ENCODE measurements at regions of chr6 and their contacts with region 1.

Region 1: GRCh38 chr6:42928986-42929820 is at the start of gene CNPY3:
- DNase-seq: peak; percentile 95 to 97 (median 96)
- H3K4me3 ChIP-seq: peak within 1 kb of the TSS; percentile 79 to 89
- H3K4me3 Mint-ChIP-seq: peak within 1 kb of the TSS; percentile 97 to 100 (median 98)
- H3K27ac ChIP-seq: peak within 1 kb of the TSS; percentile 86
- H3K27ac Mint-ChIP-seq: peak within 1 kb of the TSS; percentile 98 to 100 (median 99)
- H3K4me1 ChIP-seq: peaks cover 49% of the 10 kb centered on the region
- H3K4me1 Mint-ChIP-seq: peaks cover 29 to 59% (median 42%) of the 10 kb centered on the region in 4 donors
- H3K27me3 ChIP-seq: no peaks in the 10 kb centered on the region
- H3K27me3 Mint-ChIP-seq: no peaks in the 10 kb centered on the region
- total RNA-seq, gene CNPY3: 83.4 to 86.7 TPM

Region 2: DNA sequence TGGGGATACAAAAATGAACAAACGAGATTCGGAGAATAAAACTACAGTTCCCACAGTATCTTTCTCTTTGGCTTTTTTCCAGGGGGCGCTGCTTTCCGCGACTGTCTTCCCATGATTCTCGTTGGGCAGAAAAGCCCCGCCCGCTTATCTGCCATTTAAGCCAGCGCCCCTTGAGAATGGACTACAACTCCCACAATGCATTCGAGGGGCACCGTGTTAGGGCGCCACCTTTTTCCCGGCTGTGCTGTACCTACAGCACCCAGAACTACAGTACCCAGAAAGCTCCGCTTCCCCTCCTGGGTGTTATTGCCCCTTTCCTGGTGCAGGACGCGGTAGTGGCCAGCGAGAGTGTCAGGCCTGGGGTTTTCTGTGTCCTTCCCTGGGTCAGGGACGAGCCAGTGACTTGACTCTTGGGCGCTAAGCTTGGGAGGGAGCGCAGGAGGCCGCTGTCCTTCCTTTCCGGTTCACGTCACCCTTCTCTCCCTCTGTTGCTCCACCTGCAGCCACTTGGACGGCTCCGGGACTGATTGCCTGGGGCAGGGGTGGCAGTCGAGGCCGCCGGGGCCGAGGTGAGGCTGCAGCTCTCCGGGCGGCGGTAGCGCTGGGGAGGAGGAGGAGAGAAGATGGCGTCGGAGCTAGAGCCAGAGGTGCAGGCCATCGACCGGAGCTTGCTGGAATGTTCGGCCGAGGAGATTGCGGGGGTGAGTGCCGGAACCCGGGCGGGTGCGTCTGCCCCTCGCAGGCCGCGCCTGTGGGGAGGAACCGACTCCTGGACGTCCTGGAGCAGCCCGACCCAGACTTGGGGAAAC is 365.3 kb before region 1 on chr6 and contains the start of gene UBR2:
- CTCF ChIA-PET with region 1: no interaction called
- POLR2A ChIA-PET with region 1: interaction called, 18 read pairs
- intact Hi-C with region 1: no loop called
- DNase-seq: peak; percentile 92 to 98 (median 95)
- H3K4me3 ChIP-seq: peak within 1 kb of the TSS; percentile 98 to 100
- H3K4me3 Mint-ChIP-seq: peak within 1 kb of the TSS; percentile 92 to 100 (median 98)
- H3K27ac ChIP-seq: peak within 1 kb of the TSS; percentile 94
- H3K27ac Mint-ChIP-seq: peak within 1 kb of the TSS; percentile 90 to 98 (median 96)
- H3K4me1 ChIP-seq: peaks cover 33% of the 10 kb centered on the region
- H3K4me1 Mint-ChIP-seq: peaks cover 21 to 43% (median 28%) of the 10 kb centered on the region in 4 donors
- H3K27me3 ChIP-seq: no peaks in the 10 kb centered on the region
- H3K27me3 Mint-ChIP-seq: peaks cover 0 to 1% of the 10 kb centered on the region in 2 donors
- total RNA-seq, gene UBR2: 55.0 to 55.7 TPM

Region 3: DNA sequence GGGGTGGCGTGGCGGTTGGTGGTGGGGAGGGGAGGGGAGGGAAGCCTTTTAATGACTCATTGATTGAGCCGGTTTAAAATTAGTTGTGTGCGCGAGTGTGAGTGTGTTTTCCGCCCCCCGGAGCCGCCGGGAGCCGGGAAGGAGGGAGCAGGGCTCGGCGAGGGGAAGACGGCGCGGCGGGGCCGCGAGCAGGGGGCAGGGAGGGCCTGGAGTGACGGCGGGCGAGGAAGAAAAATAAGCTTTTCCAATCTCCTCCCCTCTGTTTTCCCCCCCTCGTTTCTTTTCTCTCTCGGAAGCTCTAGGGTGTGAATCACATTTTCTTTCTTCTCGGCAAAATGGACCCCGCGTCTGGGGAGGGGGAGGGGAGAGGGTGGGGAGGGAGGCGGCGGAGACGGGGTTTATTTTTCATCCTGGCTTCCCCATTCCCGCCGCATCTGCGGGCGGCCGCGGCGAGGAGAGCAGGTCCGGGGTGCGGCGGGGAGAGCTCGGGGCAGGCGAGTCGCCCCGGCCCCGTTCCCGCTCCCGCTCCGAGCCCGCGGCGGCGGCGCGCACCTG is 146.5 kb before region 1 on chr6:
- CTCF ChIA-PET with region 1: no interaction called
- POLR2A ChIA-PET with region 1: interaction called, 12 read pairs
- intact Hi-C with region 1: no loop called
- DNase-seq: peak; percentile 82 to 87 (median 82)
- H3K4me3 ChIP-seq: peak overlapping the region; percentile 80 to 88
- H3K4me3 Mint-ChIP-seq: peak overlapping the region; percentile 95 to 100 (median 99)
- H3K27ac ChIP-seq: peak overlapping the region; percentile 100
- H3K27ac Mint-ChIP-seq: peak overlapping the region in 6 of 7 donors; percentile 100
- H3K4me1 ChIP-seq: peaks cover 68% of the 10 kb centered on the region
- H3K4me1 Mint-ChIP-seq: peaks cover 20 to 46% (median 28%) of the 10 kb centered on the region in 4 donors
- H3K27me3 ChIP-seq: no peaks in the 10 kb centered on the region
- H3K27me3 Mint-ChIP-seq: peaks cover 0 to 1% of the 10 kb centered on the region in 2 donors

Region 4: GRCh38 chr6:42901536-42901957 is 27.7 kb before region 1 on chr6:
- CTCF ChIA-PET with region 1: interaction called, 10 read pairs
- POLR2A ChIA-PET with region 1: interaction called, 3 read pairs
- intact Hi-C with region 1: loop called (anchors 1 kb)
- DNase-seq: peak; percentile 71 to 80 (median 77)
- H3K4me3 ChIP-seq: no peak overlapping the region
- H3K4me3 Mint-ChIP-seq: no peak overlapping the region
- H3K27ac ChIP-seq: no peak overlapping the region
- H3K27ac Mint-ChIP-seq: peak overlapping the region in 1 of 7 donors; percentile 4
- H3K4me1 ChIP-seq: peaks cover 8% of the 10 kb centered on the region
- H3K4me1 Mint-ChIP-seq: peaks cover 4 to 11% (median 6%) of the 10 kb centered on the region in 4 donors
- H3K27me3 ChIP-seq: no peaks in the 10 kb centered on the region
- H3K27me3 Mint-ChIP-seq: no peaks in the 10 kb centered on the region

Region 5: DNA sequence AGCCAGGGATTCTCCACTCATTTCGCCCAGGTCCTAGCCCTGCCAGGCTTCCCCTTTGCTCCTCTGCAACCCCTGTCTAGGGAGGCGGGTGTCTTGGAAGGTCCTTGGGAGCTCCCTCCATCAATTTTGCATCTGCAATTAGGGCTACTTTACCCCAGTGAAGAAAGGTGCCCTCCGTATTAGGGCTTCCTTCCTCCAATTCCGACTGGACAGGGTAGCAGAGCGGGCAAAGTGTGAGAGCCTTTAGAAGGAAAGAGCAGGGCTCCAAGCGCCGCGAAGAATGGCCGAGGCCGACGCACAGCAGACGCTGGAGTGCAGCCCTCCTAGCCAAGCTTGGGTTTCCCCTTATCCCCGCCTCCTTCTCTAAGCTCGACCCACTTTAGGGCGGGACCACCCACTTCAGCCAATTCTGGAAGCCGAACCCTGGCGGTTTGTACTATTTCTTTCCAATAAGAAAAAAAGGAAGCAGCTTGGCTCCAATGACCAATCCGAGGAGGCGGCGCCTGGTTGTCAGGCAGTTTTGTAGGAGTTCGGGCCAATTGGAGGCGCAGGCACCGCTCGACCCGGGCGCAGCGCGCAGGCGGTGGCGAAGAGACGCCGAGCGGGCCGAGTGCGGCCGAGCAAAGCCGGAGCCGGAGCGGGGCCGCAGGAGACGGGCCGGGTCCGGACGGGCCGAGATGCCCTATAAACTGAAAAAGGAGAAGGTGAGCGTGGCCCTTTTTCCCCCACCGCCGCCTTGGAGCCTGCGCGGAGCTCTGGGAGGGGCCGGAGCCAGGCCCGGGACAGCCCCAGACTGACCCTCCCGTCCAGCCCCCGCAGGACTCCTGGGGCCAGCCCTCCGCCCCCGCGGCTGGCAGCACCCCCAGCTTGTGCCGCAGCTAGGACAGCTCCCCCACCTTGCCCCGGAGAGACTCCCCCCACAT is 55.1 kb after region 1 on chr6 and contains the start of gene PPP2R5D:
- CTCF ChIA-PET with region 1: interaction called, 12 read pairs
- POLR2A ChIA-PET with region 1: interaction called, 100 read pairs
- intact Hi-C with region 1: loop called (anchors 1 kb)
- DNase-seq: peak; percentile 96 to 99 (median 98)
- H3K4me3 ChIP-seq: peak within 1 kb of the TSS; percentile 70 to 75
- H3K4me3 Mint-ChIP-seq: peak within 1 kb of the TSS; percentile 88 to 97 (median 94)
- H3K27ac ChIP-seq: peak within 1 kb of the TSS; percentile 87
- H3K27ac Mint-ChIP-seq: peak within 1 kb of the TSS; percentile 93 to 98 (median 96)
- H3K4me1 ChIP-seq: peaks cover 58% of the 10 kb centered on the region
- H3K4me1 Mint-ChIP-seq: peaks cover 45 to 73% (median 62%) of the 10 kb centered on the region in 4 donors
- H3K27me3 ChIP-seq: no peaks in the 10 kb centered on the region
- H3K27me3 Mint-ChIP-seq: no peaks in the 10 kb centered on the region
- total RNA-seq, gene PPP2R5D: 36.6 to 38.0 TPM

Region 6: DNA sequence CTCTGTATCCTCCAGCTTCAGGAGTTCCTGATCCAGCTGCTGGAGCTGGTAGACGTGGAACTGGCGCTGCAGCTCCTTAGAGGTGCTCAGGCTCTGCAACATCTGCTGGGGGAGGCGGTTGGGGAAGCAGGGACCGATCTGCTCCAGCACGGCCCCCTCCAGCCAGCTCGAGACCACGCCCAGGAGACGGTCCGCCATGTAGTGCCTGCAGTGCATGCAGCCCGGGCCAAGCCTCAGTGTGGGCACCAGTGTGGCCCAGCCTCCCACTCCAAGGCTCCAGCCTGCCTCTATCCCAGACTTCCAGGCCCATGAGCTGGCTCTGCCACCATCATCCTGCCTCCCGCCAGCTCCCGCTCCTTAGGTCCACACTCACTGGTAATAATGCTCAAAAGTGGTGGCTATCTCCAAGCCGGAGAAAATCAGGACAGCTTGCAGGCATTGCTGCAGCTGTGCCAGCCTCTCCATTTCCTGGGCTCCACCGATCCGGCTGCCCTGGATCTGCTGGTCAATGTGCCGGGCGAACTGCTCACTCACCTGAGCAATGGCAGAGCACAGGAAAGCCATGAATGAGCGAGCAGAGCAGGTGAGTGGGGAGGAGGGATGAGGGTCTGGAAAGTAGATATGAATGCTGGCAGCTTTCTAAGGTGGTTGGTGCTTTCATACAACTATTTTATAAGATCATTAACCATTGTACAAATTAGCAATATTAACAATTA is 111.5 kb after region 1 on chr6:
- CTCF ChIA-PET with region 1: no interaction called
- POLR2A ChIA-PET with region 1: no interaction called
- intact Hi-C with region 1: no loop called
- DNase-seq: no peak
- H3K4me3 ChIP-seq: no peak overlapping the region
- H3K4me3 Mint-ChIP-seq: no peak overlapping the region
- H3K27ac ChIP-seq: no peak overlapping the region
- H3K27ac Mint-ChIP-seq: peak overlapping the region in 1 of 7 donors; percentile 22
- H3K4me1 ChIP-seq: no peaks in the 10 kb centered on the region
- H3K4me1 Mint-ChIP-seq: no peaks in the 10 kb centered on the region
- H3K27me3 ChIP-seq: no peaks in the 10 kb centered on the region
- H3K27me3 Mint-ChIP-seq: no peaks in the 10 kb centered on the region

Region 7: GRCh38 chr6:43053545-43054205 is 124.5 kb after region 1 on chr6 and contains the start of gene CUL7:
- CTCF ChIA-PET with region 1: no interaction called
- POLR2A ChIA-PET with region 1: interaction called, 42 read pairs
- intact Hi-C with region 1: loop called (anchors 1 kb)
- DNase-seq: peak; percentile 86 to 92 (median 88)
- H3K4me3 ChIP-seq: peak within 1 kb of the TSS; percentile 81 to 88
- H3K4me3 Mint-ChIP-seq: peak within 1 kb of the TSS; percentile 92 to 97 (median 94)
- H3K27ac ChIP-seq: peak within 1 kb of the TSS; percentile 85
- H3K27ac Mint-ChIP-seq: peak within 1 kb of the TSS; percentile 94 to 98 (median 97)
- H3K4me1 ChIP-seq: peaks cover 41% of the 10 kb centered on the region
- H3K4me1 Mint-ChIP-seq: peaks cover 22 to 51% (median 44%) of the 10 kb centered on the region in 4 donors
- H3K27me3 ChIP-seq: no peaks in the 10 kb centered on the region
- H3K27me3 Mint-ChIP-seq: no peaks in the 10 kb centered on the region
- total RNA-seq, gene CUL7: 13.7 to 13.9 TPM

Region 8: DNA sequence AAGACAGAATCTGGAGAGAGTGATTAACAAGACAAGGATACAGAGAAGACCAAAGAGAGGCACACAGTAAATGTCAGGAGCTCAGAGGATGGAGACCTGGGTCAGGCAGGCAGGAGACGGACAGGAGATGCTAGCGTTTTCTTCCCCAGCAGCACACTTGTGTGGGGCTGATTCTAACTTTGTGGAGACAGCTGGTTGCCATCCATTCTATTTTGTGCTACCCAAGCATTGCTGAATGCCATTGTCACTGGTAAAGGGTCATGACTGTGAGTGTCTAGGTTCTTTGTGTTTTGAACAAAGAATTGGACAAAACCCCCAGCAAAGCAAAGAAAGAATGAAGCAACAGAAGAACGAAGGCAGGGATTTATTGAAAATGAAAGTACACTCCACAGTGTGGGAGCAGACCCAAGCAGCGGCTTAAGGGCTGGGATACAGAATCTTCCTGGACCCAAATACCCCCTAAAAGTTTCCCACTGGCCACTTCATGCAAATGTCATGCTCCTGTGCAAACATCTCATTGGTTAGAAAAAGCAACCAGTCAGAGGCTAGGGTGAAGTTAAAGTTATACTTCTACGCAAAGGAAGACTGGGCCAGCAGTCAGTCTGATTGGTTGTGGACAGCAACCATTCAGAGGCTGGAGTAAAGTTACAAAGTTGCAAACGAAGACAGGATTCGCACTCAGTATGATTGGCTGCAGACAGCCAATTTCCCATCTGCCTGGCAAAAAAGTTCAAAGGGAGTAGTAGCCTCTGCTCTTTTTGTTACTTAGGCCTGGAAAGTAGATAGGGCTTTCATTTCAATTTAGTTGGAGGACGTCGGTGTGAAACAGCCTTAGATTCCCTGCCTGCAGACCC is 164.5 kb after region 1 on chr6:
- CTCF ChIA-PET with region 1: no interaction called
- POLR2A ChIA-PET with region 1: no interaction called
- intact Hi-C with region 1: no loop called
- DNase-seq: peak in 1 of 5 donors; percentile 4
- H3K4me3 ChIP-seq: no peak overlapping the region
- H3K4me3 Mint-ChIP-seq: peak overlapping the region; percentile 12 to 77 (median 58)
- H3K27ac ChIP-seq: no peak overlapping the region
- H3K27ac Mint-ChIP-seq: peak overlapping the region in 3 of 7 donors; percentile 18 to 88 (median 41)
- H3K4me1 ChIP-seq: peaks cover 15% of the 10 kb centered on the region
- H3K4me1 Mint-ChIP-seq: peaks cover 12 to 22% (median 15%) of the 10 kb centered on the region in 4 donors
- H3K27me3 ChIP-seq: no peaks in the 10 kb centered on the region
- H3K27me3 Mint-ChIP-seq: no peaks in the 10 kb centered on the region

Region 9: GRCh38 chr6:43228951-43229802 is 300.0 kb after region 1 on chr6 and contains the start of gene DNPH1:
- CTCF ChIA-PET with region 1: no interaction called
- POLR2A ChIA-PET with region 1: interaction called, 7 read pairs
- intact Hi-C with region 1: loop called (anchors 1 kb)
- DNase-seq: peak; percentile 71 to 84 (median 79)
- H3K4me3 ChIP-seq: peak within 1 kb of the TSS; percentile 11 to 69
- H3K4me3 Mint-ChIP-seq: peak within 1 kb of the TSS; percentile 88 to 96 (median 92)
- H3K27ac ChIP-seq: peak within 1 kb of the TSS; percentile 63
- H3K27ac Mint-ChIP-seq: peak within 1 kb of the TSS; percentile 94 to 97 (median 95)
- H3K4me1 ChIP-seq: peaks cover 49% of the 10 kb centered on the region
- H3K4me1 Mint-ChIP-seq: peaks cover 26 to 48% (median 34%) of the 10 kb centered on the region in 4 donors
- H3K27me3 ChIP-seq: no peaks in the 10 kb centered on the region
- H3K27me3 Mint-ChIP-seq: peaks cover 3 to 4% of the 10 kb centered on the region in 2 donors
- total RNA-seq, gene DNPH1: 32.8 to 34.8 TPM

Measured in CD4-positive, alpha-beta memory T cell (primary cell).